ENCODE measurements at regions of chr7 and their contacts with region 1.

Region 1: GRCh38 chr7:30412810-30413504 is 65.6 kb downstream of the NOD1 start:
- DNase-seq: peak in 1 of 2 donors; percentile 49
- ATAC-seq: peak; percentile 85 to 95 (median 92)
- H3K4me3 ChIP-seq: no peak overlapping the region
- H3K27ac ChIP-seq: no peak overlapping the region
- H3K4me1 ChIP-seq: peaks cover 0 to 26% (median 0%) of the 10 kb centered on the region in 9 donors
- H3K27me3 ChIP-seq: no peaks in the 10 kb centered on the region
- CTCF ChIP-seq: peak; percentile 27 to 78 (median 68)

Region 2: GRCh38 chr7:29946428-29947186 is 466.4 kb before region 1 on chr7:
- intact Hi-C with region 1: loop called in 1 of 10 experiments (anchors 5 kb)
- DNase-seq: peak in 1 of 2 donors; percentile 35
- ATAC-seq: peak; percentile 47 to 78 (median 66)
- H3K4me3 ChIP-seq: no peak overlapping the region
- H3K27ac ChIP-seq: peak overlapping the region in 1 of 10 donors; percentile 3
- H3K4me1 ChIP-seq: peaks cover 0 to 14% (median 0%) of the 10 kb centered on the region in 9 donors
- H3K27me3 ChIP-seq: no peaks in the 10 kb centered on the region
- CTCF ChIP-seq: peak in 7 of 9 donors; percentile 20 to 59 (median 47)

Region 3: DNA sequence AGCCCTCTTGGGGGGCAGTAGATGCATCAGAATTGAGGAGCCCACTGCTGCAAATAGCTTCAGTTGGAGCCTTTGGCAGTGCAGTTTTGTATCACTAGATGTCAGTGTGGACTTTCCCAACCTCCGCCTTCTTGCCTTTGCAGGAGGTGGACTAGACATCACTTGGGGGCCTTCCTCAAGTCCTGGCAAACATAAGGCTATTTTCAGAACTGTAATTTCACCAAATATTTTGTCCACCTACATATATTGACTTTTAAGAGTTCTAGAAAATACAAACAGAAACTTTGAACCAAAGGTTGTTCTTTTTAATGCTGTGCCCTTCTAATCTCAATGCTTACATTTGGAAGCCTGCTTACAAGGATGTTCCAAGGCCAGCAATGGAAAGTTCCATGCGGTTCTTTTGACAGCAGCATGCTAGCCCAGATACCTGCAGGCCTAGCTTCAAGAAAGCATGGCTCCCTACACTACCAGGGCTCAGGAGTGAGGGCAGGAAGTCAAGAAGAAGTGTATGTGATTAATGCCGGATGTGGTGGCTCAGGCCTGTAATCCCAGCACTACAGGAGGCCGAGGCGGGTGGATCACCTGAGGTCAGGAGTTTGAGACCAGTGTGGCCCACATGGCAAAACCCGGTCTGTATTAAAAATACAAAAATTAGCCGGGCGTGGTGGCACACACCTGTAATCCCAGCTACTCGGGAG is 136.6 kb before region 1 on chr7:
- intact Hi-C with region 1: loop called (anchors 2 to 10 kb)
- DNase-seq: peak in 1 of 2 donors; percentile 59
- ATAC-seq: peak; percentile 64 to 85 (median 76)
- H3K4me3 ChIP-seq: no peak overlapping the region
- H3K27ac ChIP-seq: no peak overlapping the region
- H3K4me1 ChIP-seq: peaks cover 0 to 22% (median 0%) of the 10 kb centered on the region in 9 donors
- H3K27me3 ChIP-seq: no peaks in the 10 kb centered on the region
- CTCF ChIP-seq: peak; percentile 40 to 78 (median 66)

Region 4: DNA sequence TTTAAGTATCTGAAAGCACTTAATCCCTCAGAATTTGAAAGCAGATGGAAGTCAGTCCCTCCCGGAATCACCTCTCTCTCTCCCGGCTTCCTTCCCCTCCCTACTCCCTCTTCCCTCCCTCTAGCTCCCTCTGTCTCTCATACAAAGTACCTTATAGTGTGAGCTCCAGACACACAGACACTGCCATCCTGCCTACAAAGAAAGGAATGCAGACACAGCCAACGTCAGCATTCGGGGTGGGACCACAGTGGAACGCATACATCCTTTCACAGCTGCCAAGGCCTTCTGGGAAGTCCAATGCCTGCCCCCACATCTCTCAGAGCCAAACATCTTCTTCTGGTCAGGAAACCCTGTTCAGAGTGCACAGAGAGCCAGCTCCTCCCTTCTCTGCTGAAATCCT is 56.3 kb after region 1 on chr7:
- intact Hi-C with region 1: no loop called
- DNase-seq: peak; percentile 63 to 90
- ATAC-seq: peak; percentile 76 to 88 (median 82)
- H3K4me3 ChIP-seq: peak overlapping the region in 3 of 10 donors; percentile 6 to 24 (median 23)
- H3K27ac ChIP-seq: peak overlapping the region; percentile 59 to 99 (median 86)
- H3K4me1 ChIP-seq: peaks cover 37 to 100% (median 89%) of the 10 kb centered on the region in 9 donors
- H3K27me3 ChIP-seq: no peaks in the 10 kb centered on the region
- CTCF ChIP-seq: peak in 8 of 9 donors; percentile 14 to 67 (median 50)